Heart right ventricle (tissue), 16 donors: ENCODE measurements at regions of chr14 and their contacts with region 1.

Region 1: GRCh38 chr14:99729991-99730868 is 46.1 kb downstream of the CYP46A1 start:
- DNase-seq: peak; percentile 71 to 80
- ATAC-seq: peak; percentile 45 to 72 (median 60)
- H3K4me3 ChIP-seq: peak overlapping the region; percentile 37 to 66 (median 58)
- H3K27ac ChIP-seq: peak overlapping the region in 5 of 10 donors; percentile 35 to 76 (median 53)
- H3K4me1 ChIP-seq: peaks cover 12 to 57% (median 47%) of the 10 kb centered on the region in 9 donors
- H3K27me3 ChIP-seq: peaks cover 0 to 17% (median 0%) of the 10 kb centered on the region in 7 donors
- CTCF ChIP-seq: peak; percentile 86 to 97 (median 91)

Region 2: DNA sequence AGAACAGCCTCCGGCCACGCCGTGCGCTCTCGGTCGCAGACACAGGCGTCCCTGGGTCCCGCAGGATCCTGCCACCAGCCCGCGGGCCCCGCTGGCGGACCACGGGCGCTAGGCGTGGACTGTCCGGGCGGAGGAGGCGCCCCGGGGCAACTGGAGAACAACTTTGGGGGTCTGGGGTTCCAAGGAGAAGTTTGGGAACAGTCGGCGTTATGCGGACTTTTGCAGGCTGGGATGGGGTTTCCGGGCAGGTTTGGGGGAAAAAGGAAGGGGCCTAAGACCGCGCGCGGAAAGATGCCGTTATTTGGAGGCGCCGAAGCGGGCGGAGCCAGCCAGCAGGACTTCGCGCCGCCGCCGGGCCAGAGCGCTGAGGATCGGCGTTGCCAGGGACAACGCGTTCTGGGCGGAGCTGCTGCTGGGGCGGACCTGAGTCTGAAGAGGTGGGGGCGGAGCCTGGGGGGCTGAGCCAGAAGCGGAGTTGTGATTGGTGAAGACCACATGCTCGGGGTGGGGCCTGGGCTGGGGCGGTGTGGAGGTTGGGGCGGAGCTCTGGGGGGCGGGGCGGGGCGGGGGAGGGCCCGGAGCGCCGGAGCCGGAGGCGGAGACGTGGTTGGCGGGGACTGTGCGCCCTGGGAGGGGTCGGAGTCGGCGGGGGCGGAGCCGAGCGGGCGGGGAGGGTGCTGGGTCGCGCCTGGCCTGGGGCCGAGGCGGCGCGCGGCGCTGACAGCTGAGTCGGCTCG is 46.4 kb before region 1 on chr14 and contains the start of gene CYP46A1:
- intact Hi-C with region 1: loop called in 1 of 10 experiments (anchors 5 kb)
- DNase-seq: peak; percentile 100
- ATAC-seq: peak; percentile 97 to 99 (median 98)
- H3K4me3 ChIP-seq: peak within 1 kb of the TSS; percentile 51 to 99 (median 87)
- H3K27ac ChIP-seq: peak within 1 kb of the TSS in 9 of 10 donors; percentile 71 to 94 (median 80)
- H3K4me1 ChIP-seq: peaks cover 9 to 25% (median 15%) of the 10 kb centered on the region in 9 donors
- H3K27me3 ChIP-seq: peaks cover 0 to 25% (median 0%) of the 10 kb centered on the region in 7 donors
- CTCF ChIP-seq: no peak
- total RNA-seq, gene CYP46A1: 2.0 to 6.1 (median 3.9) TPM

Region 3: DNA sequence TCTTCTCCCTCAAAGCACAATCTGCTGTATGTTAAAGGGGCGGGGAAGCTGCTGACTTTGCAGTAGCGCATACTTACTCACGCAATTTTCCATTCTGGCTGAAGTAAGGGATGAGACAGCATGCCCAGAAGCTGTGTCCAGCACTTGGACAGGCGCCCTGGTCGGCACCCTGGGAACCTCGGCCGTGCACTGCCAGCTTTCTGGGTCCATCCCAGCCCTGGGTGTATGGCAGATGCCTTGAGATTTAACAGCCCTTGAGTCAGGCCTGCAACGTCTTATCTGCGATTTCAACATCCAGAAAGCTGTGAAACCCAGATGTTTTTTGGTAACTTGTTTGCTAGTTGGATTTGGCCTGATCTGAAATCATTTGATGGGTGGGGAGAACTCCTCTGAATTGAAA is 79.1 kb after region 1 on chr14:
- intact Hi-C with region 1: loop called in 1 of 10 experiments (anchors 5 kb)
- DNase-seq: peak; percentile 56 to 80
- ATAC-seq: peak; percentile 53 to 93 (median 75)
- H3K4me3 ChIP-seq: no peak overlapping the region
- H3K27ac ChIP-seq: peak overlapping the region in 8 of 10 donors; percentile 39 to 67 (median 52)
- H3K4me1 ChIP-seq: peaks cover 0 to 42% (median 26%) of the 10 kb centered on the region in 9 donors
- H3K27me3 ChIP-seq: no peaks in the 10 kb centered on the region
- CTCF ChIP-seq: no peak